ENCODE measurements at regions of chr12 and their contacts with region 1.

Region 1: GRCh38 chr12:11581179-11581755 is 68.2 kb upstream of the ETV6 start:
- DNase-seq: peak; percentile 54 to 67 (median 57)
- H3K4me3 ChIP-seq: no peak overlapping the region
- H3K4me3 Mint-ChIP-seq: no peak overlapping the region
- H3K27ac ChIP-seq: no peak overlapping the region
- H3K27ac Mint-ChIP-seq: peak overlapping the region in 1 of 8 donors; percentile 68
- H3K4me1 ChIP-seq: peaks cover 3% of the 10 kb centered on the region
- H3K4me1 Mint-ChIP-seq: peaks cover 3 to 4% (median 3%) of the 10 kb centered on the region in 3 donors
- H3K27me3 ChIP-seq: no peaks in the 10 kb centered on the region
- H3K27me3 Mint-ChIP-seq: peaks cover 7 to 15% of the 10 kb centered on the region in 2 donors

Region 2: DNA sequence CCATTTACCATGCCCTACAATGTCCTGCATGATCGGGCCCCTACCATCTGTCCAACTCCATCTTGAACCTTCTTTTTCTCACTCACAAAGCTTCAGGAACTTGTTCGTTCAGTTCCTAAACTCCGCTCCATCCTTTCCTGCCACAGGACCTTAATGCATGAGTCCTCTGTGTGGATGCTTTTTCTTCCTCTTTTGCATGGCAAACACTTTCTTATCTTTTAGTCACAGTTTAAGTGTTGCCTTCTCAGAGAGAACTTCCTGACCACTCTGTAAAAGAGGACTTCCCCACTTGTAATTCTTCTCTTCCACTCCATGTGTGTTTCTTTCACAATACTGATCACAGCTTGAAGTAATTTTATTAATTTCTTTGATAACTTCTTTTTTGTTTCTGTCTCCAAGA is 13.8 kb after region 1 on chr12:
- CTCF ChIA-PET with region 1: no interaction called
- POLR2A ChIA-PET with region 1: no interaction called
- DNase-seq: no peak
- H3K4me3 ChIP-seq: no peak overlapping the region
- H3K4me3 Mint-ChIP-seq: no peak overlapping the region
- H3K27ac ChIP-seq: no peak overlapping the region
- H3K27ac Mint-ChIP-seq: no peak overlapping the region
- H3K4me1 ChIP-seq: no peaks in the 10 kb centered on the region
- H3K4me1 Mint-ChIP-seq: no peaks in the 10 kb centered on the region
- H3K27me3 ChIP-seq: no peaks in the 10 kb centered on the region
- H3K27me3 Mint-ChIP-seq: peaks cover 1 to 5% of the 10 kb centered on the region in 2 donors

Region 3: DNA sequence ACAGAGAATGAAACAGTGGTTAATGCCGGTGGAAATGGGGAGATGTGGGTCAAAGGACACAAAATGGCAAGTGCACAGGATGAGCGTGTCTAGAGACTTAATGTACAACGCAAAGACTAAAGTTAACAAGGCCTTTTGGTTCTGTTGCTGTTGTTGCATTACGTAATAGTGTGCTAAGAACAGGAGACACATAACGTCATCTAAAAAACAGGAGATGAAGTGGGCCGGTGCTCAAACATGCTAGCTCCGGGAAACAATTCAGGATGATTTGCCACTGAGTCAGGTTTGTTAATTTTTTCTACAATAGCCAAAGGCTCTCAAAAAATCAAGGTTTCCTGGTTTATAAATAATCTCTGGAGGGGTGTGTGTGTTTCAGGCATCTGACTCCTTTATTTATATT is 123.7 kb after region 1 on chr12:
- CTCF ChIA-PET with region 1: no interaction called
- POLR2A ChIA-PET with region 1: no interaction called
- DNase-seq: no peak
- H3K4me3 ChIP-seq: no peak overlapping the region
- H3K4me3 Mint-ChIP-seq: no peak overlapping the region
- H3K27ac ChIP-seq: no peak overlapping the region
- H3K27ac Mint-ChIP-seq: peak overlapping the region in 1 of 8 donors; percentile 15
- H3K4me1 ChIP-seq: no peaks in the 10 kb centered on the region
- H3K4me1 Mint-ChIP-seq: peaks cover 22 to 43% (median 35%) of the 10 kb centered on the region in 3 donors
- H3K27me3 ChIP-seq: no peaks in the 10 kb centered on the region
- H3K27me3 Mint-ChIP-seq: no peaks in the 10 kb centered on the region

Region 4: GRCh38 chr12:12032851-12033588 is 451.8 kb after region 1 on chr12:
- CTCF ChIA-PET with region 1: interaction called, 120 read pairs
- POLR2A ChIA-PET with region 1: no interaction called
- DNase-seq: peak in 4 of 5 donors; percentile 55 to 75 (median 64)
- H3K4me3 ChIP-seq: peak overlapping the region; percentile 70
- H3K4me3 Mint-ChIP-seq: peak overlapping the region; percentile 68 to 92 (median 78)
- H3K27ac ChIP-seq: no peak overlapping the region
- H3K27ac Mint-ChIP-seq: peak overlapping the region; percentile 17 to 94 (median 66)
- H3K4me1 ChIP-seq: peaks cover 14% of the 10 kb centered on the region
- H3K4me1 Mint-ChIP-seq: peaks cover 17 to 33% (median 20%) of the 10 kb centered on the region in 3 donors
- H3K27me3 ChIP-seq: no peaks in the 10 kb centered on the region
- H3K27me3 Mint-ChIP-seq: peaks cover 0 to 8% of the 10 kb centered on the region in 2 donors

Region 5: DNA sequence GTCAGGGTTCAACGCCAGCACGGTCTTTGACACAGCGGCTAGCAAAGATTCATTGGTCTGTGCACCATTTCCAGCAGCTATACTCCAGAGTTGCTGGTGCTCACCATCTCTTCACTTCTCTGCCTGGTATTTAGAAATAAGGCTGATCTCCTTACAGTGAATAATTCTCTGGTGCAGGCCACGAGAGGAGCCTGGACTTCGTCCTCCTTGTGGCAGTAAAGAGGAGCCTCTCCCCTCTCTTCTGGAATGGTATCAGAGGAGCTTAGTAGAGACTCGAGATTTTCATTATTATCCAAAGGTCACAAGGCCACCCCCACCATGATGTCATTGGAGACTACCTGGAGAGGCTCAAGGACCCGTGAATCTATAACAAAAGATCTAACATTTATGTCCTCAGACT is 458.6 kb after region 1 on chr12:
- CTCF ChIA-PET with region 1: interaction called, 120 read pairs
- POLR2A ChIA-PET with region 1: no interaction called
- DNase-seq: no peak
- H3K4me3 ChIP-seq: no peak overlapping the region
- H3K4me3 Mint-ChIP-seq: no peak overlapping the region
- H3K27ac ChIP-seq: no peak overlapping the region
- H3K27ac Mint-ChIP-seq: no peak overlapping the region
- H3K4me1 ChIP-seq: no peaks in the 10 kb centered on the region
- H3K4me1 Mint-ChIP-seq: no peaks in the 10 kb centered on the region
- H3K27me3 ChIP-seq: no peaks in the 10 kb centered on the region
- H3K27me3 Mint-ChIP-seq: peaks cover 5 to 23% of the 10 kb centered on the region in 2 donors

Region 6: DNA sequence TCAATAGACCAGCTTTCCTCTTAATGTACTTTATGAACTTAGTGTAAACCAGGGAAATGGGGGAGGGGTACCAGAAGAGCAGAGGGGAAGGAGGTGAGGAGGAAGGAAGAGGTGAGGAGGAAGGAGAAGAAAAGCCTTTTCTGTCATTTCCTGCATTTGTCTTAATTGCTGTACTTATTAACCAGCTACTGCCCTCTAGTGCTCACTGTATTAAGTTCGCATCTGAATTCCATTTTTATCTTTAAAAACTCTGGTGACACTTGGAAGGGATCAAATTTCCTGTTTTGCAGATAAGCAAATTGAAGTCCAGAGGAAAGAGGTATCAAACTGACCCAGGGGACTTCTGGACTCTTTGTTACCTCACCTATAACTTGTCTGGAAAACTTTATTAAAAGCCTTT is 746.5 kb after region 1 on chr12:
- CTCF ChIA-PET with region 1: interaction called, 23 read pairs
- POLR2A ChIA-PET with region 1: no interaction called
- DNase-seq: peak in 2 of 5 donors; percentile 37 to 51
- H3K4me3 ChIP-seq: no peak overlapping the region
- H3K4me3 Mint-ChIP-seq: no peak overlapping the region
- H3K27ac ChIP-seq: no peak overlapping the region
- H3K27ac Mint-ChIP-seq: peak overlapping the region in 5 of 8 donors; percentile 20 to 85 (median 59)
- H3K4me1 ChIP-seq: peaks cover 9% of the 10 kb centered on the region
- H3K4me1 Mint-ChIP-seq: peaks cover 4 to 9% (median 8%) of the 10 kb centered on the region in 3 donors
- H3K27me3 ChIP-seq: no peaks in the 10 kb centered on the region
- H3K27me3 Mint-ChIP-seq: no peaks in the 10 kb centered on the region